ENCODE measurements at regions of chr7 and their contacts with region 1.

Region 1: GRCh38 chr7:128135515-128136214 is 104.4 kb upstream of the LRRC4 start:
- DNase-seq: no peak
- H3K4me3 ChIP-seq: peak overlapping the region; percentile 41 to 62
- H3K27ac ChIP-seq: no peak overlapping the region
- H3K4me1 ChIP-seq: peaks cover 0 to 21% (median 17%) of the 10 kb centered on the region in 4 donors
- H3K27me3 ChIP-seq: peaks cover 4 to 60% of the 10 kb centered on the region in 2 donors
- CTCF ChIP-seq: peak; percentile 79 to 90

Region 2: GRCh38 chr7:127717502-127718339 is 417.9 kb before region 1 on chr7:
- intact Hi-C with region 1: loop called (anchors 10 kb)
- DNase-seq: no peak
- H3K4me3 ChIP-seq: no peak overlapping the region
- H3K27ac ChIP-seq: no peak overlapping the region
- H3K4me1 ChIP-seq: no peaks in the 10 kb centered on the region
- H3K27me3 ChIP-seq: no peaks in the 10 kb centered on the region
- CTCF ChIP-seq: no peak

Region 3: GRCh38 chr7:127828843-127829500 is 306.7 kb before region 1 on chr7:
- intact Hi-C with region 1: loop called (anchors 5 kb)
- DNase-seq: no peak
- H3K4me3 ChIP-seq: no peak overlapping the region
- H3K27ac ChIP-seq: no peak overlapping the region
- H3K4me1 ChIP-seq: no peaks in the 10 kb centered on the region
- H3K27me3 ChIP-seq: no peaks in the 10 kb centered on the region
- CTCF ChIP-seq: no peak

Region 4: DNA sequence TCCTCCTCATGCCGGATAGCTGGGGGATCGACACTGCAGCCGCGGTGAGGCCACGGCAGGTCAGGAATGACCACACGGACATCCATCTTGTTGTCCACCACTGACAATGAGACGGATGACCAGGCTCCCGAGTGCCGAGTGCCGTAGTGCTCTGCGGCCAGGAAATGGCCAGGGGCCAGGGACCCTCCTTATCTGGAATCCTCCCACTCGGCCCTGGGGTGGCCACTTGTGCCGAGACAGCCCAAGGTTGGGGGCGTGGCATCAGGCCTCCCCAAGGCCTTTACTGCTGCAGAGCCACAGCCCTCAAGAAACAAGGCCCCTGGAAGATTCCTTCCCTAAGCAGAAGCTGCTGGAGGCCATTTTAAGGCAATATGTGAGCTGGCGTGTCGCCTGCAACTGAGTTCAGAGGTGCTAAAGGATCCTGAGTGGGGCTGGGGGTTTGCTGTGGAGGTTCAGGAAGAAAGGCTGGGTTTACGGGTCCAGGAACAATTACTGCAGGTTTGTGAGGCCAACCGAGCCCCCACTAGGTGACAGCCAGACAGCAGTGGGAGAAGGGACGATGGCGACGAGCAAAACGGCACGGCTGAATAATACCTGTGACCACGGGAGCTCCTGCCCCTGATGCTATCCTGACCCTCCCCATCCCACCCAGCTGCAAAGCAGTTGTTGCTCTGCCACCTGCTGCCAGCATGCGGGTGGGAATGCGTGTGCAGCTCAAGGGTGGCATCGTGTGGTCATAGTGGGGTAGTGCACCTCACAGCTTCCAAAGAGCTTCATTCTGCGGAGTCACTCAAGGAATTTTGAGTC is 73.8 kb after region 1 on chr7:
- intact Hi-C with region 1: loop called (anchors 2 kb)
- DNase-seq: peak in 1 of 2 donors; percentile 51
- H3K4me3 ChIP-seq: no peak overlapping the region
- H3K27ac ChIP-seq: no peak overlapping the region
- H3K4me1 ChIP-seq: no peaks in the 10 kb centered on the region
- H3K27me3 ChIP-seq: peaks cover 0 to 54% of the 10 kb centered on the region in 2 donors
- CTCF ChIP-seq: peak; percentile 97 to 98

Measured in tibial artery (tissue), 4 donors.